ENCODE measurements at regions of chr10 and their contacts with region 1.

Region 1: DNA sequence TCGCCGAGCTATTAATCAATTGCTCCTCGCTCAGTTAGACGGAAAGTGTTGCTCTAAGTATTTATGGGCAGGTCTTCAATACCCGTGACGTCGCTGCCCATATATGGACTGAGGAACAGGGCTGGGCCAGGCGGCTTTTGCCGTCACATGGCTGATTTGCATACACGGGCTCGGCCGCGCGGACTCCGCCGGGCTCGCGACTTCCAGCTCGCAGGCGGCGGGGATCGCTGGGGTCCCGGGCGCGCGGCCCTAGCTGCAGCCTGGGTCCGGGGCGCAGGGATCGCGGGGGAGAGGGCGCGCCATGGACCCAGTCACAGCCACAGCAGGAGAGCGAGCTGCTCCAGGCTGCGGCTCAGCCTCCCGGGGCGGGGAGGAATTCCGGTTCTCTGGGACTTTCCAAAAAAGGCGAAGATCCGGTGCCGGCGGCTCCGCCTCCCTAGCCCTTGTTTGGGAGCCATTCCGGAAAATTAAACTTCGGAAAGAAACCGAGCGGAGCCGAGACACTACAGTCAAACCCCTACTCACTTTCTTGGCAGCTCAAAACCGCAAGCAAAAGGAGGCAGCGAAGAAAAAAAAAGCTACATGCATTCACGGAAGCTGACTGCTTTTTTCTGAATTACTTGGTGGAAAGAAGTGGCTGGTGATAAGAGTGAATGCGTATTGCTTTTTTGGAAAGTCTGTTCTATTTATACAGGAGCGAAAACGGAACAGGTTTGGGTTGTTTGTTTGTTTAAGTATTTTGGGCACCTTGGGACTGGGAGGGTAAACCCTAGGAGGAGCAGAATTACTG is at the start of gene EGR2:
- DNase-seq: peak; percentile 91 to 97 (median 95)
- ATAC-seq: peak; percentile 81
- H3K4me3 ChIP-seq: peak within 1 kb of the TSS; percentile 68
- H3K4me3 Mint-ChIP-seq: peak within 1 kb of the TSS; percentile 97
- H3K27ac ChIP-seq: peak within 1 kb of the TSS; percentile 70 to 92
- H3K27ac Mint-ChIP-seq: peak within 1 kb of the TSS; percentile 95
- H3K4me1 ChIP-seq: peaks cover 52% of the 10 kb centered on the region
- H3K4me1 Mint-ChIP-seq: peaks cover 53% of the 10 kb centered on the region
- H3K27me3 ChIP-seq: peaks cover 36 to 39% of the 10 kb centered on the region in 2 experiments
- H3K27me3 Mint-ChIP-seq: peaks cover 55% of the 10 kb centered on the region
- CTCF ChIP-seq: no peak
- total RNA-seq, gene EGR2: 3.2 to 5.4 TPM

Region 2: GRCh38 chr10:60944159-60944909 is 1872.2 kb before region 1 on chr10 and contains the start of gene RHOBTB1:
- CTCF ChIA-PET with region 1: no interaction called
- POLR2A ChIA-PET with region 1: no interaction called
- intact Hi-C with region 1: no loop called
- DNase-seq: peak in 6 of 14 experiments; percentile 6 to 41 (median 27)
- ATAC-seq: peak; percentile 72
- H3K4me3 ChIP-seq: peak within 1 kb of the TSS; percentile 45
- H3K4me3 Mint-ChIP-seq: peak within 1 kb of the TSS; percentile 74
- H3K27ac ChIP-seq: no peak within 1 kb of the TSS
- H3K27ac Mint-ChIP-seq: no peak within 1 kb of the TSS
- H3K4me1 ChIP-seq: peaks cover 17% of the 10 kb centered on the region
- H3K4me1 Mint-ChIP-seq: peaks cover 18% of the 10 kb centered on the region
- H3K27me3 ChIP-seq: peaks cover 20 to 40% of the 10 kb centered on the region in 2 experiments
- H3K27me3 Mint-ChIP-seq: peaks cover 83% of the 10 kb centered on the region
- CTCF ChIP-seq: no peak
- total RNA-seq, gene RHOBTB1: not detected

Region 3: GRCh38 chr10:62183442-62183841 is 633.1 kb before region 1 on chr10:
- CTCF ChIA-PET with region 1: no interaction called
- POLR2A ChIA-PET with region 1: interaction called, 3 read pairs
- intact Hi-C with region 1: loop called in 1 of 2 experiments (anchors 1 kb)
- DNase-seq: peak in 10 of 14 experiments; percentile 16 to 92 (median 37)
- ATAC-seq: peak; percentile 85
- H3K4me3 ChIP-seq: no peak overlapping the region
- H3K4me3 Mint-ChIP-seq: peak overlapping the region; percentile 21
- H3K27ac ChIP-seq: peak overlapping the region; percentile 37 to 38
- H3K27ac Mint-ChIP-seq: peak overlapping the region; percentile 86
- H3K4me1 ChIP-seq: peaks cover 45% of the 10 kb centered on the region
- H3K4me1 Mint-ChIP-seq: peaks cover 91% of the 10 kb centered on the region
- H3K27me3 ChIP-seq: no peaks in the 10 kb centered on the region
- H3K27me3 Mint-ChIP-seq: no peaks in the 10 kb centered on the region
- CTCF ChIP-seq: no peak

Region 4: DNA sequence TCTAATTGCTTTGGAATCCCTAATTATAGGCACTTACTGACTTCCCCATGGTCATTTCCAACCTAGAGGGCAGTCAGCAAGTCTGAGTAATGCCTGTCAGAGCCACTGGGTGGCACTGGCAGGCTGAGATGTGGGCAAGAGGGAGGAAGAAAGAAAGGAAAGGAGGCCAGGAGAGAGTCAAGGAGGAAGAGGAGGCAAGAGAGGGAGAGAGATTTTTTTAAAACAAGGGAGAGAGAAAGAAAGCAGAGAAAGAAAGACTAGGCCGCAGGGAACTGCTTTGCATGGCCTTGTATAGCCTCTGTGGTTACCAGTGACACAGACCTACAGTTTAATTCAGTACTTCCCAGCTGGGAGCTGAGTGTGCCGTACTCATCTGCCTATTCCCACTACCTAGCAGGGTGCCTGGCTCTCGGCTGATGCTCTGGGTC is 222.4 kb before region 1 on chr10:
- CTCF ChIA-PET with region 1: interaction called, 8 read pairs
- POLR2A ChIA-PET with region 1: interaction called, 4 read pairs
- intact Hi-C with region 1: loop called (anchors 1 to 5 kb)
- DNase-seq: peak; percentile 14 to 74 (median 38)
- ATAC-seq: peak; percentile 65
- H3K4me3 ChIP-seq: no peak overlapping the region
- H3K4me3 Mint-ChIP-seq: no peak overlapping the region
- H3K27ac ChIP-seq: no peak overlapping the region
- H3K27ac Mint-ChIP-seq: no peak overlapping the region
- H3K4me1 ChIP-seq: no peaks in the 10 kb centered on the region
- H3K4me1 Mint-ChIP-seq: no peaks in the 10 kb centered on the region
- H3K27me3 ChIP-seq: no peaks in the 10 kb centered on the region
- H3K27me3 Mint-ChIP-seq: no peaks in the 10 kb centered on the region
- CTCF ChIP-seq: peak; percentile 93

Region 5: DNA sequence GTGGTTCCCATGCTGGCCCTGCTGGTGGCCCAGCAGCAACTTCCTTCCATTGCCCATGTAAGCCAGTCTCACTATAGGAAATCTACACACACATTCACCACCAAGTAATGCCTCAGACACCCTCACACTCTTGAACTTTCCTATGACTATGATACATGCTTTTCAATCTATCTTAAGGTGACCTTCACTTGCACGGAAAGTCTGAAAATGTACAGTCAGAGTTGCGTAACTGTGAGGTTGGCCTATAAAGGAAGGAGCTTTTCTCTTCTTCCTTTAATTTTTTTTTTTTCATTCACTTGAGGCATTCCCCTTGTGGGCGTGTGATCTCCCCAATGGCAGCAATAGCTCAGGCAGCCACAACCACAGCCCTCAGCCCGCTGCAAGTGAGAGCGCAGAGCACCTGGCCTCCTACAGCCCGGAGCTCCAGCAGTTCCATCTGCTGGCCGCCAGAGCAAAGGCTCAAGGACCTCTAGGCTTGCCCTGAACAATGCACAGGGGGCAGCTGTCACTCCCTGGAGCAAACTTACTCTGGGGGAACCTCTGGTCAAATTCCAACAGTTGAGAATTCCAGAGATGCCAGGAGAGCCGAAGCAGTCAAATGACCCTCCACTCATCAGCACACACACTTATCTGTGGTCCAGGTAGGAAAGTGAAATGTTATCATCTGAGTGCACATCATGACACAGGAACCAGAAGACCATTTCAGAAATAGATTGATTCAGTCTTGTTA is 135.2 kb before region 1 on chr10:
- CTCF ChIA-PET with region 1: interaction called, 23 read pairs
- POLR2A ChIA-PET with region 1: interaction called, 12 read pairs
- intact Hi-C with region 1: loop called in 1 of 2 experiments (anchors 5 kb)
- DNase-seq: peak; percentile 25 to 93 (median 45)
- ATAC-seq: peak; percentile 95
- H3K4me3 ChIP-seq: no peak overlapping the region
- H3K4me3 Mint-ChIP-seq: no peak overlapping the region
- H3K27ac ChIP-seq: no peak overlapping the region
- H3K27ac Mint-ChIP-seq: peak overlapping the region; percentile 2
- H3K4me1 ChIP-seq: peaks cover 15% of the 10 kb centered on the region
- H3K4me1 Mint-ChIP-seq: peaks cover 12% of the 10 kb centered on the region
- H3K27me3 ChIP-seq: no peaks in the 10 kb centered on the region
- H3K27me3 Mint-ChIP-seq: no peaks in the 10 kb centered on the region
- CTCF ChIP-seq: no peak

Region 6: GRCh38 chr10:62779487-62780248 is 36.9 kb before region 1 on chr10:
- CTCF ChIA-PET with region 1: interaction called, 6 read pairs
- POLR2A ChIA-PET with region 1: interaction called, 28 read pairs
- intact Hi-C with region 1: no loop called
- DNase-seq: peak; percentile 59 to 95 (median 71)
- ATAC-seq: peak; percentile 99
- H3K4me3 ChIP-seq: no peak overlapping the region
- H3K4me3 Mint-ChIP-seq: no peak overlapping the region
- H3K27ac ChIP-seq: no peak overlapping the region
- H3K27ac Mint-ChIP-seq: peak overlapping the region; percentile 34
- H3K4me1 ChIP-seq: peaks cover 16% of the 10 kb centered on the region
- H3K4me1 Mint-ChIP-seq: peaks cover 15% of the 10 kb centered on the region
- H3K27me3 ChIP-seq: no peaks in the 10 kb centered on the region
- H3K27me3 Mint-ChIP-seq: no peaks in the 10 kb centered on the region
- CTCF ChIP-seq: no peak

Region 7: GRCh38 chr10:63027531-63027930 is 211.0 kb after region 1 on chr10:
- CTCF ChIA-PET with region 1: no interaction called
- POLR2A ChIA-PET with region 1: no interaction called
- intact Hi-C with region 1: no loop called
- DNase-seq: no peak
- ATAC-seq: no peak
- H3K4me3 ChIP-seq: no peak overlapping the region
- H3K4me3 Mint-ChIP-seq: no peak overlapping the region
- H3K27ac ChIP-seq: no peak overlapping the region
- H3K27ac Mint-ChIP-seq: no peak overlapping the region
- H3K4me1 ChIP-seq: no peaks in the 10 kb centered on the region
- H3K4me1 Mint-ChIP-seq: no peaks in the 10 kb centered on the region
- H3K27me3 ChIP-seq: no peaks in the 10 kb centered on the region
- H3K27me3 Mint-ChIP-seq: peaks cover 15% of the 10 kb centered on the region
- CTCF ChIP-seq: no peak

Region 8: DNA sequence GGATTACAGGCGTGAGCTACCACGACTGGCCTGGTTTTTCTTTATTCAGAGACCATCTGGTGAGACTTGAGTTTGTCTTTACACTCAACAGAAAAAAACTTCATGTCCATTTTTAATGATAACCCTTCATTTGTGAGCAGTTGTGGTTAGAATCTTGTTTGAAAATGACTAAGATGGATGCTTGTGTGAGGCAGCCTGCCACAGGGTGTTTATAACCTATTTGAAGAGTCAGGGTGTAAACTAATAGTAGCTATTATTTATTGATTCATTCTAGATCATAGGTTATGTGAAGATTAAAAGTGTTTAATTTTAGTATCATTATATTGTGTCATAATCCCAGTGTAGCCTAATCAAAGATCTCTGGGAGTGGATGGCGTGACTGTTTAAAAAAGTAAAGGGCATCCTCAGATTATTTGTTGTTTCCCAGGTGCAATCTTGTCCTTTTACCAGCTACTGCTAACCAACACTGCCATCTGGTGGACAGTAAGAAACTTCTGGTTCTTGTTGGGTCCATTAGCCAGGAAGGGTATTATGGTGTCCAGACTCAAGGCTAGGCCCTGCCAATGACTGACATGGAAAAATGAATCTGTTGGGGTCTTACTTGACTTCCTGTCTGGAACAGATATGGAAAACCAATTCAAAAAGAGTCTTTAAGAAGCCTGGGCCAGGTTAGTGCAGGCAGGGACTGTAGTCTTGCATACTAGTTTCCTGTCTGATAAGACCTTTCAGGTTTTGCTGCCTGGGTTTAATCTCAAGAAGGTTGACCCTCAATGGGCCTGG is 341.5 kb after region 1 on chr10:
- CTCF ChIA-PET with region 1: interaction called, 3 read pairs
- POLR2A ChIA-PET with region 1: no interaction called
- intact Hi-C with region 1: loop called in 1 of 2 experiments (anchors 5 kb)
- DNase-seq: peak in 11 of 14 experiments; percentile 10 to 89 (median 36)
- ATAC-seq: peak; percentile 75
- H3K4me3 ChIP-seq: no peak overlapping the region
- H3K4me3 Mint-ChIP-seq: no peak overlapping the region
- H3K27ac ChIP-seq: no peak overlapping the region
- H3K27ac Mint-ChIP-seq: no peak overlapping the region
- H3K4me1 ChIP-seq: no peaks in the 10 kb centered on the region
- H3K4me1 Mint-ChIP-seq: peaks cover 14% of the 10 kb centered on the region
- H3K27me3 ChIP-seq: no peaks in the 10 kb centered on the region
- H3K27me3 Mint-ChIP-seq: no peaks in the 10 kb centered on the region
- CTCF ChIP-seq: peak; percentile 94

Measured in CD4-positive, alpha-beta T cell (primary cell).